ENCODE measurements at regions of chr6 and their contacts with region 1.

Region 1: DNA sequence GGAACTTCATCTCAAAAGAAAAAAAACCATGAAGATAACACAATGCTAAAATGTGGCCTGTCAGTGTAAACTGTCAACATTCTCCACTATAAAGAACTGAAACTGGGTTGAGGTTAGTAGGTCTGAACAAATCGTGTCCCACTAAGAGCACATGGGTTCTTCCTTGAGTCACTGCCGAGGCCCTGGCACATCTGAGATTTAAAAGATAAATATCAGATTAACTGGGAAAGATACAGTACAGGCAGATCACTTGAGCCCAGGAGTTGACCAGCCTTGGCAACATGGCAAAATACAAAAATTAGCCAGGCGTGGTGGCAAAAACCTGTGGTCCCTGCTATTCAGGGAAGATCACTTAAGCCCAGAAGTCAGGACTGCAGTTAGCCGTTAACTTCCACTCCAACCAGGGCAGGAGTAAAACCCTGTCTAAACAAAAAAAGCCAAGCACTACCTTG is 5.6 kb downstream of the EEF1A1 start:
- DNase-seq: peak; percentile 41
- ATAC-seq: peak; percentile 17
- H3K4me3 Mint-ChIP-seq: peak overlapping the region; percentile 97
- H3K27ac Mint-ChIP-seq: peak overlapping the region; percentile 85
- H3K4me1 Mint-ChIP-seq: peaks cover 28% of the 10 kb centered on the region
- H3K27me3 Mint-ChIP-seq: no peaks in the 10 kb centered on the region
- CTCF ChIP-seq: no peak

Region 2: DNA sequence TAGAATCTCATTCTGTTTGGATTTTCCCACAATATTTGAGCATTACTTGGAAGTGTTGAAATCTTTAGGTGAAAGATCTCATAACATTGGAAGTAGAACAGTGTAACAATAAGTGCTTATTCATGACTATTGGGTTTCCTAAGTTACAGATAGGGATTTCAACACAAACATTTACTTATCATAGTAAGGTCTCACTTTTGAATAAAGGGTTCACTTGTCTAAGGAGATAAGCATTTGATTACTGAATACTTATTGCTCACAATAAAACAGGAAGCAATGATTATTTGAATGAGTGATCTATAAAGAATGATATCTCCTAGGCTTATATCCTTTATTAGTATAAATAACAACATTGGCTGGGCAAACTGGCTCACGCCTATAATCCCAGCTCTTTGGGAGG is 105.8 kb before region 1 on chr6:
- CTCF ChIA-PET with region 1: no interaction called
- POLR2A ChIA-PET with region 1: no interaction called
- intact Hi-C with region 1: no loop called
- DNase-seq: no peak
- ATAC-seq: no peak
- H3K4me3 Mint-ChIP-seq: no peak overlapping the region
- H3K27ac Mint-ChIP-seq: no peak overlapping the region
- H3K4me1 Mint-ChIP-seq: no peaks in the 10 kb centered on the region
- H3K27me3 Mint-ChIP-seq: no peaks in the 10 kb centered on the region
- CTCF ChIP-seq: no peak

Region 3: DNA sequence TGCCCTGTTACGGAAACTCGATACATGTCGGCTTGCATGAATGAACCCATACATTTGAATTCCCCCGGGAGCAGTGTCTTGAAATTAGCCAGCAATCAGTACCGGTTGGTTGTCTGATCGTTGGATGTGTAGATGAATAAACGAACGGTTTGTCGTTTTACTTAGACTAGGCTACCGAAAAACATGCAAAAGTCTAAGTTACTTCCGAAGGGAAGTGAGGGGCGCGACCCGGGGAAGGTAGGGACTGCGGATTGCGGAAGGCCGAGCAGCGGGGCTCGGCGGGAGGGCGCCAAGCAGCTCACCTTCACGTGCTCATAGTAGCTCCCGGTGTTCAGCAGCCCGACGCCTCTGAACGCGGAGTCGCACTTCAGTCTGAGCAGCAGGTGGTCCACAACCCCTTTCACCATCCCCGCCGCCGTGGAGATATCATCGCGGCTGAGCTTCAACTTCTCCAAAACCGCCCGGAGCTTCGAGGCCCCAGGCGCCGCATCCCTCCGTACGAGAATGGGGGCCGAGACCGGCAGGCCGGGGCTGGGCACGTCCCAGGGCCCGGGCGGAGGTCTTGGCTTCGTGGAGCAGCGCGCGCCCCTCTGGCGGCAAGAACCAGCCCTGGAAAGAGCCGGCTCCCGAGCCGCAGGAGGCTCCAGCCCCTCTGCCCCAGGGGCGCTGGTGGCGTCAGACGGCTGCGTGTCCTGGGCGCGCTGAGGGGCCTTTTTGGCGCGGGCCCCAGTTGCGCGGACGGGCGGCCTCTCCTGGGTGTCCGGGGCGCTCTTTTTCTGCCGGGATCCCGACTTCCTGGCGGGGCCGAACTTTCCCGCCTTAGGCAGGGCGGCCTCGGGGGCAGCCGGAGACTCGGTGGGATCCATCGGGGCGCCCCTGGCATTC is 63.8 kb before region 1 on chr6:
- CTCF ChIA-PET with region 1: no interaction called
- POLR2A ChIA-PET with region 1: interaction called, 37 read pairs
- intact Hi-C with region 1: no loop called
- DNase-seq: peak; percentile 62
- ATAC-seq: peak; percentile 52
- H3K4me3 Mint-ChIP-seq: peak overlapping the region; percentile 93
- H3K27ac Mint-ChIP-seq: peak overlapping the region; percentile 91
- H3K4me1 Mint-ChIP-seq: peaks cover 17% of the 10 kb centered on the region
- H3K27me3 Mint-ChIP-seq: no peaks in the 10 kb centered on the region
- CTCF ChIP-seq: no peak

Region 4: GRCh38 chr6:73481969-73482368 is 33.3 kb before region 1 on chr6:
- CTCF ChIA-PET with region 1: no interaction called
- POLR2A ChIA-PET with region 1: interaction called, 17 read pairs
- intact Hi-C with region 1: no loop called
- DNase-seq: no peak
- ATAC-seq: no peak
- H3K4me3 Mint-ChIP-seq: no peak overlapping the region
- H3K27ac Mint-ChIP-seq: no peak overlapping the region
- H3K4me1 Mint-ChIP-seq: no peaks in the 10 kb centered on the region
- H3K27me3 Mint-ChIP-seq: no peaks in the 10 kb centered on the region
- CTCF ChIP-seq: no peak

Region 5: GRCh38 chr6:73566954-73567591 is 51.8 kb after region 1 on chr6:
- CTCF ChIA-PET with region 1: no interaction called
- POLR2A ChIA-PET with region 1: interaction called, 13 read pairs
- intact Hi-C with region 1: no loop called
- DNase-seq: no peak
- ATAC-seq: no peak
- H3K4me3 Mint-ChIP-seq: no peak overlapping the region
- H3K27ac Mint-ChIP-seq: no peak overlapping the region
- H3K4me1 Mint-ChIP-seq: no peaks in the 10 kb centered on the region
- H3K27me3 Mint-ChIP-seq: no peaks in the 10 kb centered on the region
- CTCF ChIP-seq: no peak

Region 6: DNA sequence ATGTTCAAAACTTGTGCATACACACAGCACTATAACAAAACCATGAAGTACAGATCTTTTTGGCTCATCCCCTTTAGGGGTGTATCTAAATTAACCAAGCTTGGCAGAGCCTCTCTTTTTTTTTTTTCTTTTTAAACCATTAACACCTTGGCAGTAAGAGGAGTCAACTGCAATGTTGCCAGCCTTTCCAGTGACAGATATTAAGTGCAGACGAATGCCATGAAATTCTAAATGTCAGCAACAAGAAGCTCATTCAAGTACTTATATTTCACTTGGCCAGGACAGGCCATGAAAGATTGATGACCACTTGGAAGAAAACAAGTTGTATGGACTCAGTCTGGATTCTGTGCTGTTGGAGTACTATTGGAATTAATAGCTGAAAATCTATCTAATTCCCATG is 88.8 kb after region 1 on chr6:
- CTCF ChIA-PET with region 1: interaction called, 7 read pairs
- POLR2A ChIA-PET with region 1: interaction called, 204 read pairs
- intact Hi-C with region 1: no loop called
- DNase-seq: no peak
- ATAC-seq: no peak
- H3K4me3 Mint-ChIP-seq: no peak overlapping the region
- H3K27ac Mint-ChIP-seq: peak overlapping the region; percentile 11
- H3K4me1 Mint-ChIP-seq: no peaks in the 10 kb centered on the region
- H3K27me3 Mint-ChIP-seq: no peaks in the 10 kb centered on the region
- CTCF ChIP-seq: no peak

Region 7: GRCh38 chr6:73653571-73654424 is 138.6 kb after region 1 on chr6 and contains the start of gene SLC17A5:
- CTCF ChIA-PET with region 1: interaction called, 6 read pairs
- POLR2A ChIA-PET with region 1: interaction called, 78 read pairs
- intact Hi-C with region 1: loop called (anchors 5 kb)
- DNase-seq: peak; percentile 92
- ATAC-seq: peak; percentile 89
- H3K4me3 Mint-ChIP-seq: peak within 1 kb of the TSS; percentile 87
- H3K27ac Mint-ChIP-seq: peak within 1 kb of the TSS; percentile 92
- H3K4me1 Mint-ChIP-seq: peaks cover 31% of the 10 kb centered on the region
- H3K27me3 Mint-ChIP-seq: no peaks in the 10 kb centered on the region
- CTCF ChIP-seq: no peak
- total RNA-seq, gene SLC17A5: 4.2 to 5.0 TPM

Region 8: GRCh38 chr6:73710470-73710869 is 195.2 kb after region 1 on chr6:
- CTCF ChIA-PET with region 1: no interaction called
- POLR2A ChIA-PET with region 1: no interaction called
- intact Hi-C with region 1: no loop called
- DNase-seq: no peak
- ATAC-seq: no peak
- H3K4me3 Mint-ChIP-seq: no peak overlapping the region
- H3K27ac Mint-ChIP-seq: no peak overlapping the region
- H3K4me1 Mint-ChIP-seq: peaks cover 13% of the 10 kb centered on the region
- H3K27me3 Mint-ChIP-seq: peaks cover 1% of the 10 kb centered on the region
- CTCF ChIP-seq: no peak

Measured in activated CD8-positive, alpha-beta T cell treated with anti-CD3 and anti-CD28 coated beads for 36 hours (primary cell).